Gastrocnemius medialis (tissue), 4 donors: ENCODE measurements at regions of chr7 and their contacts with region 1.

Region 1: DNA sequence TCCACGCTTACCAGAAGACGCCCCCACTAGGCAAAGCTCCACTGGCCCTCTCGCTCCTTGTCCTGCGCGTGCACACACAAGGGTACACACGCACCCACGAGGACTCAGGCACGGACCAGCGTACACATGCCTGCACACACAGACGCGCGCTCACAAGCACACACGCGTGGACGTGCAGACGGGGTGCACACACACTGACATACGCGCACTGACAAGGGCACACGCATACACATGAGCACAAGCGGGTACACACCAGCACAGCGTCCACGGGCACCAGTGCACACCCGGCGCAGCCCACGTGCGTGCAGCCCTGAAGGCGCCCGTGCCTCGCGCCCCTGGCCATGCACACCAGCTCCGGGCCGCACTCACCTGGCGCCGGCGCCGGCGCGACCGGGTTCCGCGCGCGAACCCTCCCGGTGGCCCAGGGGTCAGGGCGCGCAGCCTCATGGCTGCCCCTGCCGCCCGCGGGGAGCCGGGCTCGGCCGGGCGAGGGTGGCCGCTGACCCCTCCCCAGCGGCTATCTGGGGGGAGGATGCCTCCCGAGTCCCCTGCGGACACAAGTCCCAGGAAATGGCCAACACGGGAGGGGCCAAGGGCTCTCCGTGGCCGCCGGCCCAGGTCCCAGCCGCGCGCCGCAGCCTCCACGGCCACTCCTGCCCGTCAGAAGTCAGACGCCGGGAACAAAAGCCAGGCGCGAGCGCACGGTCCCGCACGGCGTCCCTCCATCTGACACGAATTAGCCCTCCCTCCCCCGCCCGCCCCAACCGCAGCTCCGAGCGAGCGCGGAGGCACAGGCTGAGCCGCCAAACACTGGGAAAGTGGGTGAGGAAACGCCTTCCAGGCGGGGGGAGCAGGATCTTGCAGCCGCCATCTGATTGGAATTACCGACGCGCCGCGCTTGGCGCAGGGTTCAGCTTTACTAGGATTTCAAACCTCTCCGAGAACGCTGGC is 45.0 kb downstream of the TNS3 start:
- DNase-seq: peak in 1 of 2 donors; percentile 43
- ATAC-seq: peak; percentile 27 to 60
- H3K4me3 ChIP-seq: peak overlapping the region; percentile 53 to 60 (median 56)
- H3K27ac ChIP-seq: peak overlapping the region in 2 of 4 donors; percentile 46 to 70
- H3K4me1 ChIP-seq: peaks cover 25 to 26% of the 10 kb centered on the region in 2 donors
- H3K27me3 ChIP-seq: no peaks in the 10 kb centered on the region
- CTCF ChIP-seq: no peak
- POLR2A ChIP-seq: no peak

Region 2: GRCh38 chr7:47514818-47515217 is 22.1 kb before region 1 on chr7:
- in situ Hi-C with region 1: no loop called
- intact Hi-C with region 1: loop called (anchors 1 kb)
- DNase-seq: no peak
- ATAC-seq: no peak
- H3K4me3 ChIP-seq: no peak overlapping the region
- H3K27ac ChIP-seq: no peak overlapping the region
- H3K4me1 ChIP-seq: peaks cover 14 to 27% of the 10 kb centered on the region in 2 donors
- H3K27me3 ChIP-seq: no peaks in the 10 kb centered on the region
- CTCF ChIP-seq: no peak
- POLR2A ChIP-seq: no peak

Region 3: GRCh38 chr7:47596502-47597202 is 59.7 kb after region 1 on chr7:
- in situ Hi-C with region 1: no loop called
- intact Hi-C with region 1: no loop called
- DNase-seq: peak; percentile 30 to 77
- ATAC-seq: peak; percentile 95 to 98
- H3K4me3 ChIP-seq: no peak overlapping the region
- H3K27ac ChIP-seq: peak overlapping the region in 3 of 4 donors; percentile 5 to 42 (median 34)
- H3K4me1 ChIP-seq: peaks cover 0 to 6% of the 10 kb centered on the region in 2 donors
- H3K27me3 ChIP-seq: no peaks in the 10 kb centered on the region
- CTCF ChIP-seq: no peak
- POLR2A ChIP-seq: no peak